ENCODE measurements at regions of chr1 and their contacts with region 1.

Region 1: GRCh38 chr1:109011335-109011734 is 30.6 kb downstream of the WDR47 start:
- DNase-seq: no peak
- ATAC-seq: no peak
- H3K4me3 ChIP-seq: no peak overlapping the region
- H3K27ac ChIP-seq: no peak overlapping the region
- H3K4me1 ChIP-seq: no peaks in the 10 kb centered on the region
- H3K27me3 ChIP-seq: no peaks in the 10 kb centered on the region
- CTCF ChIP-seq: no peak

Region 2: GRCh38 chr1:109034382-109034781 is 23.0 kb after region 1 on chr1:
- intact Hi-C with region 1: loop called in 1 of 2 experiments (anchors 2 kb)
- DNase-seq: no peak
- ATAC-seq: no peak
- H3K4me3 ChIP-seq: no peak overlapping the region
- H3K27ac ChIP-seq: no peak overlapping the region
- H3K4me1 ChIP-seq: no peaks in the 10 kb centered on the region
- H3K27me3 ChIP-seq: no peaks in the 10 kb centered on the region
- CTCF ChIP-seq: no peak

Measured in psoas muscle (tissue), 8 donors.